ENCODE measurements at regions of chr16 and their contacts with region 1.

Region 1: GRCh38 chr16:54193665-54194333 is 92.8 kb downstream of the IRX3 start:
- DNase-seq: peak; percentile 79 to 89
- H3K4me3 ChIP-seq: peak overlapping the region; percentile 42 to 57
- H3K27ac ChIP-seq: peak overlapping the region; percentile 86 to 89
- H3K4me1 ChIP-seq: peaks cover 0 to 18% (median 15%) of the 10 kb centered on the region in 4 donors
- H3K27me3 ChIP-seq: no peaks in the 10 kb centered on the region
- CTCF ChIP-seq: peak; percentile 88 to 90

Region 2: DNA sequence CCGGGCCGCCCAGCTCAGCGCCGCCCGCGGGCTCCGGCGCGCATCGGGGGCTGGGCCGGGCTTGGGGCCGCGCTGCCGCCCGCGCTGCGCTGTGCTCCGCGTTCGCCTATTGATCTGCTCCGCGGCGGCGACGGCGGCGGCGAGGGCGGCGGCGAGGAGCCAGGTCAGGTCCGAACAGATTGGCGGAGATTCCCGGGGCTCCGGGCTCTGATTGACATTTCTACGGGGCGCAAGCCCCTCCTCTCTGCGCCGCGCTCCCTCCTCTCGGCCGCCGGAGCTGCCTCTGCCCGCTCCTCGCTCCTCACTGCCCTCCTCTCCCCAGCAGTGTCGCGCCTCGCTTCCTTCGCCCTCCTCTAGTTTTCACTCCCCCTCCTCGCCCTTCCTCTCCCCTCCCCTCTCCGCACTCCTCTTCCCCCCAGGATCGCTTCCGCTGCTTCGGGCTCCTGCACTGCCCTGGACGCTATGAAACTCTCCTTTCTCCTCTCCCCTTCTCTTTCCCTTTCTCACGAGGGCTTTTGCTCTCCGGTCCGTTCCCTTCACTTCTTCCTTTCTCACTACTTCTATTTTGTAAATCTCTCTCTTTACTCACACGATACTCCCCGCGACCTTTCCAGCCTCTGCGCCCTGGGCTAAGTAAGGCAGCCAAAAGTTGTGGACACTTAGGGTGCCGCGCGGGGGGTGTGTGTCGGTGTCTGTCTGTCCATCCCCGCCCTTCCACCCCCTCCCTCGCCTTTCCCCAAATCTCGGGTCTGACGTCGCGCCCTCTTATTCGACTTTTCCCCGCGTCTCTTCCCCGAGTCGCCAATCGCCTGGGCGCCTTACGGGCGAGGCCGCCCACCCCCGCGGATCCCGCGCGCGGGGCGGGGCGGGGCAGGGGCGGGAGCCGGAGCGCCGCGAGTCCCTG is 92.5 kb after region 1 on chr16 and contains the start of gene IRX3:
- intact Hi-C with region 1: loop called (anchors 10 kb)
- DNase-seq: peak; percentile 87 to 93
- H3K4me3 ChIP-seq: peak within 1 kb of the TSS; percentile 66 to 91
- H3K27ac ChIP-seq: peak within 1 kb of the TSS; percentile 77 to 91
- H3K4me1 ChIP-seq: peaks cover 0 to 48% (median 34%) of the 10 kb centered on the region in 4 donors
- H3K27me3 ChIP-seq: peaks cover 0 to 16% of the 10 kb centered on the region in 2 donors
- CTCF ChIP-seq: no peak

Measured in tibial artery (tissue), 4 donors.